ENCODE measurements at regions of chr10 and their contacts with region 1.

Region 1: GRCh38 chr10:94320285-94320914 is 42.3 kb downstream of the NOC3L start:
- DNase-seq: no peak
- H3K4me3 ChIP-seq: no peak overlapping the region
- H3K27ac ChIP-seq: no peak overlapping the region
- H3K4me1 ChIP-seq: peaks cover under 1 to 43% (median 34%) of the 10 kb centered on the region in 4 donors
- H3K27me3 ChIP-seq: no peaks in the 10 kb centered on the region
- CTCF ChIP-seq: peak; percentile 78 to 90 (median 84)
- EP300 ChIP-seq: no peak
- POLR2A ChIP-seq: no peak

Region 2: DNA sequence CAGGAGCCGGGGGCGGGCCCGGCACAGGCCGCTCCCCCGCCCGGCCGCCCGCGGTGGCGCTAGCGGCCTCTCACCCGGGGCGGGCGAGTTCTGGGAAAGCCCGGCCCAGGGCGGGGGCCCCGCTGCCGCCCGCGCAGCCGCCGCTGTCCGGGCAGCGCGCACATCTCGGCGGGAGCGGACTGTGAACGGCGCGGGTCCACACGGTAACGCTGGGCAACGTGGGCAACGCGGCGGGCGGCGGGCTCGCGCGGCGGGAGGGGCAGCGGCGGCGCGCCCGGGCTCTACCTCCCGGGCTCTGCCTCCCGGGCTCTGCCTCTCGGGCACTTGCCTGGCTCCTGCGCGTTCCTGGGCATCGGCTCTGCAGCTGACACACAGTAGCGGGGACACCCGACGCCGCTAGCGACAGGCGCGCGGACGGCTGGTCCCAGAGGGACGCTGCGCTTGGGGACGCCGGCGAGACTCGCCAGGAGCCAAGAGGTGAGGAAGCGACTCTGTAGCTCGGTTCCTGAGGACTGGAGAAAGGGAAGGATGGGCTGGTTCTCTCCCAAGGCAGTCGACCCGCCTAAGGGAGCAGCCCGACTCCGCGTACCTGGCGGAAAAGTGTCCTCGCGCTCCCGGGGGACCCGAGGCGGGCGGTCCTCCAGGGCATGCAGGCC is 326.5 kb before region 1 on chr10 and contains the start of gene PLCE1:
- intact Hi-C with region 1: loop called (anchors 5 kb)
- DNase-seq: no peak
- H3K4me3 ChIP-seq: peak within 1 kb of the TSS; percentile 73 to 91 (median 75)
- H3K27ac ChIP-seq: peak within 1 kb of the TSS; percentile 66 to 78 (median 73)
- H3K4me1 ChIP-seq: peaks cover 18 to 56% (median 30%) of the 10 kb centered on the region in 4 donors
- H3K27me3 ChIP-seq: peaks cover 0 to 6% (median 0%) of the 10 kb centered on the region in 4 donors
- CTCF ChIP-seq: peak in 1 of 3 experiments; percentile 24
- EP300 ChIP-seq: no peak
- POLR2A ChIP-seq: no peak
- total RNA-seq, gene PLCE1: 17.7 to 26.7 (median 20.8) TPM

Region 3: DNA sequence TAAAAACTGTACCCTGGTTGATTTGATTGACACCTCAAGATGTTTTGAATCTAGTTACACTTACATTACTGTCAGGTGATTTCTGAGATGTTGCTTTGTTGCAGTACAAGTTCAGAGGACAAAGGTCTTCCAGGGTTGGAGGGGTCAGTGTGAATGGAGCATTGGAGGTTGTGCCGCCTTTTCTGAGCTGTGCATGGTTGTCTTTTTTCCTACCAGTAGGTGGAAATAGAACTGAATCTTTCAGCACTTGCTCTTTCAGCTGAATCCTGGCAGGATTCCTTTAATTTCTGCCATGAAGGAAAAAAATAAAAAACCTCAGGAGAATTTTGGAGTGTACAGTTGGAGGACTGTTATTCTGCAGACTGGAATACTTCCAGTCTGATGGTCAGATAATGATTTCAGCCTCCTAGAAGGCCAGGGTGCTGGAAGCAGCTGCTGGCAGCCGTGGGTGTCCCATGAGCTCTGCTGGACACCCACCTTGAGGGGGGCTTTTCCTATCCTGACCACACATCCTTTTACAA is 244.0 kb before region 1 on chr10:
- intact Hi-C with region 1: loop called (anchors 2 kb)
- DNase-seq: no peak
- H3K4me3 ChIP-seq: peak overlapping the region in 1 of 4 donors; percentile 15
- H3K27ac ChIP-seq: peak overlapping the region; percentile 43 to 67 (median 54)
- H3K4me1 ChIP-seq: peaks cover 23 to 39% (median 27%) of the 10 kb centered on the region in 4 donors
- H3K27me3 ChIP-seq: no peaks in the 10 kb centered on the region
- CTCF ChIP-seq: peak; percentile 60 to 71 (median 67)
- EP300 ChIP-seq: no peak
- POLR2A ChIP-seq: no peak